Activated CD4-positive, alpha-beta T cell treated with anti-CD3 and anti-CD28 coated beads, Interleukin-2, amount 10 ng/mL, durations not matched to agents 24 days and 14 days (primary cell): ENCODE measurements at regions of chr7 and their contacts with region 1.

Region 1: GRCh38 chr7:101244375-101245146 is at the start of gene FIS1:
- DNase-seq: peak; percentile 98
- H3K4me3 Mint-ChIP-seq: peak within 1 kb of the TSS; percentile 97
- H3K27ac Mint-ChIP-seq: peak within 1 kb of the TSS; percentile 94
- H3K4me1 Mint-ChIP-seq: peaks cover 16% of the 10 kb centered on the region
- H3K27me3 Mint-ChIP-seq: no peaks in the 10 kb centered on the region
- total RNA-seq, gene FIS1: 127 and 136 TPM in 2 replicates

Region 2: GRCh38 chr7:101153969-101154692 is 90.4 kb before region 1 on chr7 and contains the start of gene AP1S1:
- intact Hi-C with region 1: loop called (anchors 1 kb)
- DNase-seq: peak; percentile 98
- H3K4me3 Mint-ChIP-seq: peak within 1 kb of the TSS; percentile 86
- H3K27ac Mint-ChIP-seq: peak within 1 kb of the TSS; percentile 65
- H3K4me1 Mint-ChIP-seq: peaks cover 14% of the 10 kb centered on the region
- H3K27me3 Mint-ChIP-seq: peaks cover 18% of the 10 kb centered on the region
- total RNA-seq, gene AP1S1: 44.2 and 49.2 TPM in 2 replicates

Region 3: DNA sequence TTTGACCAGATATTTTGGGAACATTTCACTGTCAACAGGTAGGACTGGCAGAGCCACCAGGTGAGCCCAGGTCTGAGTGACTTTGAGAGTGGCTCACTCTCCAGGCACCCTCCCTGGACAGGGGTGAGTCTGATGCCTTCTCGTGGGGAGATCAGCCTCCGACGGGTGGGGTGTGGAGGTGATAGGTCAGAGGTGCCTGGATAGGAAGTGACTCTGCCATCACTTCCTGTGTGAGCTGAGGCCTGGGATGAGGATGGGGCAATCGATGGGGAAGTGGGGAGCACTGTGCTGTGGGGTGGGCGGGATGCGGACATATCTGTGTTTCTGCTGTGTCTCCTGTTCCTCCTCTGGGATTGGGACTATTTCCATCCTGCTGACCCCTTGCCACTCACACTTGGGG is 42.5 kb after region 1 on chr7:
- intact Hi-C with region 1: loop called (anchors 2 kb)
- DNase-seq: no peak
- H3K4me3 Mint-ChIP-seq: no peak overlapping the region
- H3K27ac Mint-ChIP-seq: no peak overlapping the region
- H3K4me1 Mint-ChIP-seq: peaks cover 14% of the 10 kb centered on the region
- H3K27me3 Mint-ChIP-seq: peaks cover 19% of the 10 kb centered on the region